ENCODE measurements at regions of chr5 and their contacts with region 1.

Region 1: GRCh38 chr5:69042915-69043658 is 50.7 kb upstream of the SLC30A5 start:
- DNase-seq: peak; percentile 81
- CTCF ChIP-seq: peak; percentile 70

Region 2: DNA sequence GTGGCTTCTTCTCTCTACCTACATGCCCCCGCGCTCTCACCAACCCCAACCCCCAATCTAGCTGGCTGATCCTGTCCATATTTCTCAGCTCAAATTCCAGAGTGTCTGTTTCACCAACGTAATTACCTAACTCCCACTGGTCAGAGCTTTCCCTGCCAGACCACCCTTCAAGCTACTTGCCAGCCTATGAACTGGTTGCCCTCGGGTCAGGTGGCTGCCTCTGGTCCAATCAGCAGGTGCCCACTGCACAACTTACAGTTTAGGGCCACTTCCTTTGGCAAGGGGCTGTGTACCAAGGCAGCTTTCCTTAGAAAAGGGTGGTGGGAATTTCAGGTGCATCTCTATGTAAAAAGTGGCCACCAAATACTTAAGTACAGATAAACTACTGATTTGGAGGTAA is 41.5 kb before region 1 on chr5:
- CTCF ChIA-PET with region 1: no interaction called
- POLR2A ChIA-PET with region 1: no interaction called
- DNase-seq: no peak
- CTCF ChIP-seq: no peak

Region 3: DNA sequence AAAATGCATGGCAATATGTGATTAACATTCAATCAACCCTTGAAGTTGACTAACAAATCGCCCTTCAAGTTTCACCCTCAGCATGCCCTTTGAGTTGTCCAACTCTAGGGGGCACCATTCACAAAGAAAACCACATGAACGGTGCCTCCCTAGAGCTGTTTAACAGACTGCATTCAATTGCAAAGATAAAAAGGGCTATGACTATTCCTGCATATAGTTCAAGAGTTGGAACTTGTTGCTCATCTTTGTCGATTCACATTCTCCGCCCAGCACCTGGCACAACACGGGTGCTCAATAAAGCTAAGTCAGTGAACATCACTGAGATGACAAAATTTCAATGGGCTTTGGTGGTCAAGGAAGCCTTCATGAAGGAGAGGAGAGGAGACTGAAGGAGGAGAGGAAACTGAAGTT is 18.8 kb before region 1 on chr5:
- CTCF ChIA-PET with region 1: interaction called, 19 read pairs
- POLR2A ChIA-PET with region 1: no interaction called
- DNase-seq: peak; percentile 48
- CTCF ChIP-seq: peak; percentile 62

Region 4: GRCh38 chr5:69032009-69032408 is 11.1 kb before region 1 on chr5:
- CTCF ChIA-PET with region 1: interaction called, 19 read pairs
- POLR2A ChIA-PET with region 1: no interaction called
- DNase-seq: no peak
- CTCF ChIP-seq: no peak

Region 5: GRCh38 chr5:69083412-69083811 is 40.3 kb after region 1 on chr5:
- CTCF ChIA-PET with region 1: interaction called, 10 read pairs
- POLR2A ChIA-PET with region 1: no interaction called
- DNase-seq: no peak
- CTCF ChIP-seq: no peak

Region 6: DNA sequence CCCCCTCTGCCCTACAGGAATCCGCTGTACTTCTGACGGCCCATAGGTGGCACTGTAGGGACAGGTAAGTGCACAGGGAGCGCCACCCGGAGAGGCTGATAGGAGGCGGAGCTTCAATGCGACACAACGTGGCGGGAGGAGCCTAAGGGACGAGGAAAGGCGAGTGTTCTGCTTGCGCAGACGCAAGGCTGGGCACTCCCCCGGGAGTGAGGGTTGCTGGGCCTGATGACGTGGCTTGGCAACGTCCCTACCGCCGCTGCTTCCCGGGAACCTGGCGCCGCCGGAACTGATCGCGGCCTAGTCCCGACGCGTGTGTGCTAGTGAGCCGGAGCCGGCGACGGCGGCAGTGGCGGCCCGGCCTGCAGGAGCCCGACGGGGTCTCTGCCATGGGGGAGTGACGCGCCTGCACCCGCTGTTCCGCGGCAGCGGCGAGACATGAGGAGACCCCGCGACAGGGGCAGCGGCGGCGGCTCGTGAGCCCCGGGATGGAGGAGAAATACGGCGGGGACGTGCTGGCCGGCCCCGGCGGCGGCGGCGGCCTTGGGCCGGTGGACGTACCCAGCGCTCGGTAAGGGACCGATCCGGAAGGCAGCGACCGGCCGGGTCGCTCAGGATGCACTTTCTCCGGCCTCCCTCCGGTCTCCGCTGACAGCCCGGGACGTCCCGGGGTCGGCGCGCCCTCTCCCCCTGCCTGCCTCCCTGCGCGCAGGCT is 50.8 kb after region 1 on chr5 and contains the start of gene SLC30A5:
- CTCF ChIA-PET with region 1: interaction called, 12 read pairs
- POLR2A ChIA-PET with region 1: no interaction called
- DNase-seq: peak; percentile 97
- CTCF ChIP-seq: peak; percentile 95